Prostate gland (tissue), 2 donors: ENCODE measurements at regions of chr10 and their contacts with region 1.

Region 1: DNA sequence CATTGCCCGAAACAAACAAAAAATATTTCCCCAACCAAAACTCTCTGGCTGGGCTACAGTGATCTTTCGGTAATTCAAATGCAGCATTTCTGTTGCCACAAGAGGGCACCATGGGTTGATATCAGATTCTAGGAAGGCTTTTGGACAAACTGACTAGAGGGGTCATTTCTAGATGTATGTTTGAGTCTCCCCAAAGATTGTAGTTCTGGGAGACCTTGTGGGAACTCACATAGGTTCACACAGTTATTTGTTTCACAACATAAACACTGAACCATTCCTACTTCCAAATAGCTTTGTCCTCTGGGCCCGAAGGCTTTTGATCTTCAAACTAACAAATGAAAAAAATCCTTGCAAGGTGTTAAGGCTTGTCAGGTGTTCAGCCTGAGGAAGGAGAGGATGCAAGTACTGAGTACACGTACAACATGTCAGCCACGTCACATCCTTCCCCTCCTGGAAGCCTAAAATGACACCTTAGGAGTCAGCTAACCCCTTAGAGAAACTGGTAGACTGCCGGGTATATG is 37.0 kb upstream of the IL15RA start:
- DNase-seq: peak; percentile 26
- H3K4me3 ChIP-seq: no peak overlapping the region
- H3K27ac ChIP-seq: no peak overlapping the region
- H3K4me1 ChIP-seq: no peaks in the 10 kb centered on the region
- H3K27me3 ChIP-seq: no peaks in the 10 kb centered on the region
- CTCF ChIP-seq: peak; percentile 38 to 67 (median 60)
- POLR2A ChIP-seq: no peak

Region 2: GRCh38 chr10:6045314-6045848 is 31.1 kb after region 1 on chr10:
- intact Hi-C with region 1: loop called (anchors 5 kb)
- DNase-seq: no peak
- H3K4me3 ChIP-seq: no peak overlapping the region
- H3K27ac ChIP-seq: no peak overlapping the region
- H3K4me1 ChIP-seq: no peaks in the 10 kb centered on the region
- H3K27me3 ChIP-seq: no peaks in the 10 kb centered on the region
- CTCF ChIP-seq: no peak
- POLR2A ChIP-seq: no peak

Region 3: DNA sequence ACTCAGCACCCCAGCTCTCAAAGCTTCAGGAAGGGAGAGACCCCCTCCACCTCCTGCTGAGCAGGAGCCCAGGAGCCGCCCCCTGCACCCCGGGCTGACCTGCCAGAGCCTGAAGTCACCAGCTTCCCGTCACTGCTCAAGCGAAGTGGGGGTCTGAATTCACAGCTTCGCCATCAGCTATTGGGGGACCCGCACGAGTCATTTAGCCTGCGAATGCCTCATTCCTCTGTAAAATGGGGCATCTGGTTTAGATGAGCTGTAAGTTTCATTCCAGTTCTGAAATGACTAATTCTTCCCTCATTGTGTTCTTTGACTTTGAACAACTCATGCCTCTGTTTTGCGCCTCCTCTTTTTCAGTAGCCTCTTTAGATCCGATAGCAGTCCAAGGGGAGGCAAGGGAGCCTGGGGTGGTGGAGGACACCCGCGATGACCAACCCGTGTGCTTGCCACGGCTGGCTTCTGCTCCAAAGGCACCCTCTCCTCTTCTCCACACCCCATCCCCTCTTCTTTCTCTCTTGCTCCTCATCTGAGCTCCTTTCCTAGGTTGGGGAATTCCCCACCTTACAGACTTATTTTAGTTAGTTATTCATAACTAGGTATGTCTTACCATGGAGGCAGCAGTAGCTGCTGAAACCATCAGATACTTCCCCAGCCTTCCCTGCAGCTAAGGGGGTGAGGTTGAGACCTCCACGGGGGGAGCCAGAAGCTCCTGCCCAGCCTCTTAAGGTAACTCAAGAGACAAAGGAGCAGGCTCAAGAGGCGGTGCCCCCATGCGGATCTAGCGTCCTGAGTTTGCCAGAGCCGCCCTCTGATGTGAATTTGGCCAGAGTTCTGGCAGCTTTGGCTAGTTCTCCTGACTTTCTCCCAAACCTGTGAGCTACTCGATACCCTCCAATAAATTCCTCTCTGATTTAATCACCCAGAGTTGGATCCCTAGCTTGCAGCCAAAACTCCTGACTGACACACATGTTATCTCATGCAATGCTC is 122.2 kb after region 1 on chr10:
- intact Hi-C with region 1: no loop called
- DNase-seq: no peak
- H3K4me3 ChIP-seq: no peak overlapping the region
- H3K27ac ChIP-seq: no peak overlapping the region
- H3K4me1 ChIP-seq: no peaks in the 10 kb centered on the region
- H3K27me3 ChIP-seq: no peaks in the 10 kb centered on the region
- CTCF ChIP-seq: no peak
- POLR2A ChIP-seq: no peak